T-cell (primary cell): ENCODE measurements at regions of chr22 and their contacts with region 1.

Region 1: GRCh38 chr22:28570691-28571373 is 108.8 kb downstream of the TTC28 start:
- DNase-seq: no peak
- ATAC-seq: no peak
- H3K4me3 ChIP-seq: no peak overlapping the region
- H3K4me3 Mint-ChIP-seq: no peak overlapping the region
- H3K27ac ChIP-seq: no peak overlapping the region
- H3K27ac Mint-ChIP-seq: no peak overlapping the region
- H3K4me1 ChIP-seq: no peaks in the 10 kb centered on the region
- H3K4me1 Mint-ChIP-seq: no peaks in the 10 kb centered on the region
- H3K27me3 ChIP-seq: peaks cover 0 to 3% of the 10 kb centered on the region in 2 experiments
- H3K27me3 Mint-ChIP-seq: peaks cover 10 to 12% of the 10 kb centered on the region in 2 donors

Region 2: GRCh38 chr22:28129319-28129962 is 441.4 kb before region 1 on chr22:
- CTCF ChIA-PET with region 1: no interaction called
- POLR2A ChIA-PET with region 1: no interaction called
- DNase-seq: no peak
- ATAC-seq: no peak
- H3K4me3 ChIP-seq: no peak overlapping the region
- H3K4me3 Mint-ChIP-seq: no peak overlapping the region
- H3K27ac ChIP-seq: no peak overlapping the region
- H3K27ac Mint-ChIP-seq: no peak overlapping the region
- H3K4me1 ChIP-seq: no peaks in the 10 kb centered on the region
- H3K4me1 Mint-ChIP-seq: no peaks in the 10 kb centered on the region
- H3K27me3 ChIP-seq: peaks cover 0 to 4% of the 10 kb centered on the region in 2 experiments
- H3K27me3 Mint-ChIP-seq: peaks cover 0 to 3% of the 10 kb centered on the region in 2 donors

Region 3: GRCh38 chr22:28514321-28514821 is 56.5 kb before region 1 on chr22:
- CTCF ChIA-PET with region 1: no interaction called
- POLR2A ChIA-PET with region 1: interaction called in 1 of 2 experiments, 14 read pairs
- DNase-seq: no peak
- ATAC-seq: no peak
- H3K4me3 ChIP-seq: no peak overlapping the region
- H3K4me3 Mint-ChIP-seq: no peak overlapping the region
- H3K27ac ChIP-seq: no peak overlapping the region
- H3K27ac Mint-ChIP-seq: no peak overlapping the region
- H3K4me1 ChIP-seq: no peaks in the 10 kb centered on the region
- H3K4me1 Mint-ChIP-seq: no peaks in the 10 kb centered on the region
- H3K27me3 ChIP-seq: no peaks in the 10 kb centered on the region
- H3K27me3 Mint-ChIP-seq: peaks cover 10 to 21% of the 10 kb centered on the region in 2 donors

Region 4: DNA sequence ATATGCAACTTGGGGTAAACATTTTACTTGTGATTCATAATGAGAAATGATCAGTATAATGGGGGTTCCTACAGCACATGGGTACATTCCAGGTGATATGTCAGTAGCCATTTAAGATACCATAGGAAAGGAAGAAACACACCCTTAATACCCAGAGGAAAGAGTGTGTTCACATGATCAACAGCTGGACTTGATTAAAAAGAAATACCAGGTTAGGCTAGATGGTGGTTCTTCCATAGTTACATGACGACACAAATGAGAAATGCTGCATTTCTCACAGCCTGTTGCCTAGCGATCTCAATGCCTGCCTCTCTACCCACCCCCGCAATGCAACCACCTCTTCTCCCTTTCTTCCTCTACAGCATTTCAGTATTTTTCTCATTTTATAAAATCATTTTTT is 12.0 kb after region 1 on chr22:
- CTCF ChIA-PET with region 1: no interaction called
- POLR2A ChIA-PET with region 1: no interaction called
- DNase-seq: no peak
- ATAC-seq: no peak
- H3K4me3 ChIP-seq: no peak overlapping the region
- H3K4me3 Mint-ChIP-seq: no peak overlapping the region
- H3K27ac ChIP-seq: no peak overlapping the region
- H3K27ac Mint-ChIP-seq: no peak overlapping the region
- H3K4me1 ChIP-seq: no peaks in the 10 kb centered on the region
- H3K4me1 Mint-ChIP-seq: no peaks in the 10 kb centered on the region
- H3K27me3 ChIP-seq: peaks cover 0 to 6% of the 10 kb centered on the region in 2 experiments
- H3K27me3 Mint-ChIP-seq: peaks cover 13% of the 10 kb centered on the region in 2 donors